WTC11 (cell line): ENCODE measurements at regions of chr14 and their contacts with region 1.

Region 1: GRCh38 chr14:96584199-96584906 is 82.2 kb downstream of the PAPOLA start:
- DNase-seq: peak; percentile 86
- ATAC-seq: peak; percentile 91
- H3K4me3 Mint-ChIP-seq: no peak overlapping the region
- H3K27ac Mint-ChIP-seq: no peak overlapping the region
- H3K4me1 Mint-ChIP-seq: peaks cover 44% of the 10 kb centered on the region
- H3K27me3 Mint-ChIP-seq: no peaks in the 10 kb centered on the region
- CTCF ChIP-seq: peak; percentile 49; the same call in 1 of the 2 replicates

Region 2: DNA sequence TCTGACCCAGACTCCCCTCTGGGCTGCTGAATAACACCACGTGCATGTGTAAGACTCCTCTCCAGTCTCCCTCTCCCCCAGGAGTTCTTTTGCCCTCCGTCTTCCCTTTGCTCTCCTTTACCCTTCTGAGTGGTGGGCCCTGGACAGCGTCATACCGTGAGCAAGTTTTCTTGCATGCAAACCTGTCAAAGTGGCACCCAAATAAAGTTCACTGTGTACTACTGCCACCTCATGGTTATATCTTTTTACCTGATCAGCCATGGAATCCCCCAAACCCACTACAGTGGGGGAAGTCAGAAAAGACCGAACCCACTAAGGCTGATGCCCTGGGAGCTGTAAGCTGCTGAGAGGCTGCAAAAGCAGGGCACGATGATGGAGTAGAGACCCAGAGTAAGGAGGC is 81.7 kb after region 1 on chr14:
- CTCF ChIA-PET with region 1: interaction called, 11 read pairs
- POLR2A ChIA-PET with region 1: no interaction called
- DNase-seq: no peak
- ATAC-seq: no peak; the same call in 1 of the 2 replicates
- H3K4me3 Mint-ChIP-seq: no peak overlapping the region
- H3K27ac Mint-ChIP-seq: no peak overlapping the region
- H3K4me1 Mint-ChIP-seq: peaks cover 37% of the 10 kb centered on the region
- H3K27me3 Mint-ChIP-seq: no peaks in the 10 kb centered on the region
- CTCF ChIP-seq: no peak

Region 3: GRCh38 chr14:96741151-96741977 is 157.0 kb after region 1 on chr14:
- CTCF ChIA-PET with region 1: interaction called, 57 read pairs
- POLR2A ChIA-PET with region 1: no interaction called
- DNase-seq: peak; percentile 79
- ATAC-seq: peak; percentile 77
- H3K4me3 Mint-ChIP-seq: peak overlapping the region; percentile 83
- H3K27ac Mint-ChIP-seq: no peak overlapping the region
- H3K4me1 Mint-ChIP-seq: peaks cover 50% of the 10 kb centered on the region
- H3K27me3 Mint-ChIP-seq: peaks cover 6% of the 10 kb centered on the region
- CTCF ChIP-seq: peak; percentile 99

Region 4: GRCh38 chr14:96852823-96853422 is 268.6 kb after region 1 on chr14:
- CTCF ChIA-PET with region 1: interaction called, 22 read pairs
- POLR2A ChIA-PET with region 1: no interaction called
- DNase-seq: no peak
- ATAC-seq: no peak
- H3K4me3 Mint-ChIP-seq: no peak overlapping the region
- H3K27ac Mint-ChIP-seq: peak overlapping the region; percentile 58; the same call in 1 of the 2 replicates
- H3K4me1 Mint-ChIP-seq: 0 out of 2 replicates have a peak, but pooled peaks cover 7% of the 10 kb centered on the region
- H3K27me3 Mint-ChIP-seq: no peaks in the 10 kb centered on the region
- CTCF ChIP-seq: peak; percentile 60